BJ (cell line): ENCODE measurements at regions of chr20 and their contacts with region 1.

Region 1: GRCh38 chr20:2349818-2350508 is 30.7 kb upstream of the TGM6 start:
- DNase-seq: no peak
- H3K4me3 ChIP-seq: no peak overlapping the region
- H3K27me3 ChIP-seq: peaks cover 2% of the 10 kb centered on the region
- CTCF ChIP-seq: no peak

Region 2: DNA sequence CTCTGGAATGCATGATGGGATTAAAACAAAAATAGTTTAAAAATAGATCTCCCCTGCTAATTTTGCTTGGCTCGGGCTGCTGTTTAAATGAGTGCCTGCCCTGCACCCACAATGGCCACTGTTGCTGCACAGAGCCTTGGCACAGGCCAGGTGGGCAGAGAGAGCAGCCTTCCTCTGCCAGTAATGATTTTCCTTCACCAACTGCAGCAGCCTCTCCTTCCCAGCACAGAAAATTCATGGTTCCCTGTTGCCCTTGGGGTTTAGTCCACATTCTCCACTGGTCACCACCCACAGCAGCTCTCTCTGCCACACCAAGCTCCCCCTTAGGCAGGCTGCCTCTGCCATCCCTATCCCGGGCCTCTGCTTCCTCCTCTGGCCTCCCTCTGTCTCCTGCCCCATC is 23.9 kb before region 1 on chr20:
- CTCF ChIA-PET with region 1: no interaction called
- POLR2A ChIA-PET with region 1: no interaction called
- DNase-seq: no peak
- H3K4me3 ChIP-seq: no peak overlapping the region
- H3K27me3 ChIP-seq: no peaks in the 10 kb centered on the region; the same call in none of the 2 replicates
- CTCF ChIP-seq: no peak

Region 3: GRCh38 chr20:2364044-2364443 is 14.1 kb after region 1 on chr20:
- CTCF ChIA-PET with region 1: interaction called, 4 read pairs
- POLR2A ChIA-PET with region 1: interaction called, 12 read pairs
- DNase-seq: no peak
- H3K4me3 ChIP-seq: no peak overlapping the region
- H3K27me3 ChIP-seq: no peaks in the 10 kb centered on the region
- CTCF ChIP-seq: no peak

Region 4: DNA sequence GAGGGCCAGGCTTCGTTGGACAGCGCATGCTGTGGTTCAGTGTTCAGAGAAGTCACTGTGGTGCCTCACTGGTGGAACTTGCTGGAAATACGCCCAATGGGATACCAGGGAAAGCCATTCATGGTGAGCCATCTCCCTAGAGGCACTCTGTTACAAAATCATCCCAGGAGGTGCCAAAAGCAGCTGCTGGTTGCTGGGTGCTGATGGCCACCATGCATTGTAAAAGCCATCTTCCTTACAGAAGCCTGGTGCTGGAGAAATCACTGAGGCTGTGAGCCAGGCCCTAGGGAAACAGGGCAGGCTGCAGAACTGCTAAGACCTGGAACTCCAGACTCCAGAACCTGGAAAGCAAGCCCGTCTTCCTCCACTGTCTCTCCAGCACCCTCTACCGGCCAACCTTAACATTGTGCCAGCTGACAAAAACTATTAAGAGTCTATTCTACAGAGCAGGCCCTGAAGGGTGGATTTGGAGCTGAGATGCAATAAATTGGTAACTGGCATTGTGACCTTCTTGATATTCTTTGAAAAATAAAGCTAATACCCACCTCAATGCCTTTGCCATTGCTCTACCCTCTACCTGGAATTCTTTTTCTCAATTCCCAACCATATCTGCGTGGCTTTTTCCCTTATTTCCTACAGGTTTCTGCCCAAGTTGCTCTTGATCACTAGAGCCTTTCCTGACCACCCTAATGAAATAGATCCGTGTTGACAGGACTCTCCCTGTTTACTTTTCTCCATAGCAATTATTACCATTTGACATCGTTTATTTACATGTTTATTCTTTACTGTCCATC is 102.2 kb after region 1 on chr20:
- CTCF ChIA-PET with region 1: interaction called, 14 read pairs
- POLR2A ChIA-PET with region 1: no interaction called
- DNase-seq: no peak
- H3K4me3 ChIP-seq: no peak overlapping the region
- H3K27me3 ChIP-seq: no peaks in the 10 kb centered on the region
- CTCF ChIP-seq: peak; percentile 93